ENCODE measurements at regions of chr4 and their contacts with region 1.

Region 1: DNA sequence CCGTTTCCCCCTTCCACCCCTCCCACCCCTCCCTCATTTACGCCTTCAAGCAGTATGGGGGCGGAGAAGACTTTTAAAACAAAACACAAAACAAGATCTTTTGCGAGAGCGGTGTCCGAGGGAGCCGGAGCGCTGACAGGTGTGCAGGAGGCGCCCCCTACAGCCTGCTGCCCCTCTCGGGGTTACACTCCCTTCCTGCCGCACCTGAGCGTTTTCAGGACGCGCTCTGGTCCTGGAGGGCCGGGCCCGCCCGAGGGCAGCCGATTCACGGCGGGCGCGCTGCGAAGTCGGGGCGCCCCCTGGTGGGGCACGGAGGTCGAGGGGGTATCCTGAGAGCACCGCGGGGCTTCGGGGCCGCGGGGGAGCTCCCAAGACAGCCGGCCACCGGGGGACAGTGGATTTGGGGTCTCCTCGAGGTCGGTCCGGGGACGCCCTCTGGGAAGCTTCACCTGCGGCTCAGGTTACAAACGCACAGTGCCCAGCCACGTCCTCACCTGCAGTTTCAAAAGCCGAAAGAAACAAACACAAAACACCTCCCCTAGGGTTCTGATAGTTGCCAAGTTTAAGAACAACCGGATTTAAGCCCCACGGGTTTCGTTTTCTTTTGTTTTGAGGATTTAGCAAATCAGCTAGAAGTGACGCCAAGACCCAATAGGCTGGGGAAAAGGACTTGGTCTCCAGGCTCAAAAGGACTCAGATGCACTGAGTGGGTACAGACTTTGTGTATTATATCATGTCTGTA is 8.0 kb upstream of the NEUROG2 start:
- DNase-seq: peak; percentile 84 to 89
- H3K4me3 ChIP-seq: peak overlapping the region; percentile 8
- H3K4me3 Mint-ChIP-seq: peak overlapping the region; percentile 40
- H3K27ac Mint-ChIP-seq: no peak overlapping the region
- H3K4me1 ChIP-seq: no peaks in the 10 kb centered on the region
- H3K4me1 Mint-ChIP-seq: peaks cover 6% of the 10 kb centered on the region
- H3K27me3 ChIP-seq: no peaks in the 10 kb centered on the region
- H3K27me3 Mint-ChIP-seq: peaks cover 21% of the 10 kb centered on the region
- CTCF ChIP-seq: peak; percentile 80 to 84

Region 2: DNA sequence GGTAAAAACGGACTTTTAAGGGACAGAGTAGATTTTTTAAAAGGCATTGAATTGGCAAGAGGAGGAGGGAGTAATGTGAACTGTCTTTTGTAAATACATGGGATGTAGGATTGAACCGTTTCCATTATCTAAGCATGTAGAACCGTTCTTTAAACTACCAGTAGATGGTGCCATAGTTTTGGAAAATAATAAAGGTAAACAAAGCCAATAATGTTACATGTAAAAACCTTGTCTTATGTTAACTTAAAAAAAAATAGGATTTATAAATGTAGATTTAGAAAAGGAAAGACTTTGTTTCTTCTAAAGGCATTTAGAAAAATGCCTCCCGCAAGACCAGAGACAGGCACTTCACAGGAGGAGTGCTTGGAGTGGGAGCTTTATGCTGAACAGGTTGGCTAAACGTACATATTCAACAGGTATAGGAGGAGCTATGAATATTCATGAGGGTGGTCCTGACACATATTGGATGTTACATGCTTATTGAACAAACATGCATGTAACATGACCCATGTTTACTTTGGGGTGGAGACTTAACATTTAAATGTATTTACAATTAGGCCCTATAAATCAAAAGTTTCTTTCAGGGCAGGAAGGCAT is 424.1 kb before region 1 on chr4:
- CTCF ChIA-PET with region 1: no interaction called
- POLR2A ChIA-PET with region 1: no interaction called
- intact Hi-C with region 1: loop called (anchors 5 kb)
- DNase-seq: peak in 1 of 2 experiments; percentile 38
- H3K4me3 ChIP-seq: no peak overlapping the region
- H3K4me3 Mint-ChIP-seq: no peak overlapping the region
- H3K27ac Mint-ChIP-seq: no peak overlapping the region
- H3K4me1 ChIP-seq: no peaks in the 10 kb centered on the region
- H3K4me1 Mint-ChIP-seq: no peaks in the 10 kb centered on the region
- H3K27me3 ChIP-seq: no peaks in the 10 kb centered on the region
- H3K27me3 Mint-ChIP-seq: peaks cover 4% of the 10 kb centered on the region
- CTCF ChIP-seq: peak; percentile 50 to 65

Region 3: GRCh38 chr4:112321776-112322684 is 201.9 kb before region 1 on chr4:
- CTCF ChIA-PET with region 1: no interaction called
- POLR2A ChIA-PET with region 1: no interaction called
- intact Hi-C with region 1: loop called (anchors 1 kb)
- DNase-seq: peak; percentile 45 to 57
- H3K4me3 ChIP-seq: no peak overlapping the region
- H3K4me3 Mint-ChIP-seq: no peak overlapping the region
- H3K27ac Mint-ChIP-seq: no peak overlapping the region
- H3K4me1 ChIP-seq: no peaks in the 10 kb centered on the region
- H3K4me1 Mint-ChIP-seq: no peaks in the 10 kb centered on the region
- H3K27me3 ChIP-seq: no peaks in the 10 kb centered on the region
- H3K27me3 Mint-ChIP-seq: no peaks in the 10 kb centered on the region
- CTCF ChIP-seq: peak; percentile 75 to 77

Region 4: DNA sequence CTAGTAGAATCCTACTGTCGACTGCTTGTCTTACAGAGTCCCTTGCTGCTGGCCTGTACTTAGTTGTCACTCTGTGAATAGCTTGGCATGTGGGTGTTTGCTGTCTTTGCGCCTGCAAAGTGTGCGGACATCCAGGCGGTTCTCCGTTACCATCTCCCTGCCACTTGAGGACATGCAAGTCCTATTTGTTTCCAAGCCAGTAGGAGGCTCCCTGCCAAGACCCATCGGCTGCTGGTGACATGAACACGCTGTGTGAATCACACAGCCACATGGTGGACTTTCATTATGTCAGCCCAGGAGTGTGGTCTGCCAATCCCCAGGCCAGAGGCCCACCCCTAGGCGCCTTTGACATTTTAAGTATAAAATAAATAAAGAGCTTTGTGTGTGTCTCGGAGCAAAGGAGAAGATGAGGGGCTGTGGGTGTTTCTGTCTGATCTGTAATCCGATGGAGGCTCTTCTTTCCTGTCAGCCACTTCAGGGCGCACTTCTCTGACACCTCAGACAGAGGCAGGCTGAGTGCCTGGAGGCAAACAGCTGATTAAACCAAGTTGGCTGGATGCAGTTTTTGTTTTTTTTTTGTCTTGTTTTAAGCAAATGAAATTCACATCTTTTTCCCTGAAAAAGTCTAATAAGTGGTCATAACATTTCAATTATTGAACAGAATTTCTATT is 175.3 kb before region 1 on chr4:
- CTCF ChIA-PET with region 1: no interaction called
- POLR2A ChIA-PET with region 1: no interaction called
- intact Hi-C with region 1: loop called (anchors 5 kb)
- DNase-seq: peak; percentile 34 to 51
- H3K4me3 ChIP-seq: no peak overlapping the region
- H3K4me3 Mint-ChIP-seq: no peak overlapping the region
- H3K27ac Mint-ChIP-seq: no peak overlapping the region
- H3K4me1 ChIP-seq: no peaks in the 10 kb centered on the region
- H3K4me1 Mint-ChIP-seq: no peaks in the 10 kb centered on the region
- H3K27me3 ChIP-seq: no peaks in the 10 kb centered on the region
- H3K27me3 Mint-ChIP-seq: peaks cover 3% of the 10 kb centered on the region
- CTCF ChIP-seq: peak; percentile 12 to 39

Region 5: GRCh38 chr4:112765317-112765975 is 241.5 kb after region 1 on chr4:
- CTCF ChIA-PET with region 1: no interaction called
- POLR2A ChIA-PET with region 1: no interaction called
- intact Hi-C with region 1: loop called (anchors 10 kb)
- DNase-seq: peak in 1 of 2 experiments; percentile 33
- H3K4me3 ChIP-seq: no peak overlapping the region
- H3K4me3 Mint-ChIP-seq: no peak overlapping the region
- H3K27ac Mint-ChIP-seq: no peak overlapping the region
- H3K4me1 ChIP-seq: 0 out of 2 replicates have a peak, but pooled peaks cover 3% of the 10 kb centered on the region
- H3K4me1 Mint-ChIP-seq: peaks cover 10% of the 10 kb centered on the region
- H3K27me3 ChIP-seq: no peaks in the 10 kb centered on the region
- H3K27me3 Mint-ChIP-seq: no peaks in the 10 kb centered on the region
- CTCF ChIP-seq: peak; percentile 39 to 45

Measured in Caco-2 (cell line).